Endothelial cell of umbilical vein (primary cell): ENCODE measurements at regions of chr4 and their contacts with region 1.

Region 1: DNA sequence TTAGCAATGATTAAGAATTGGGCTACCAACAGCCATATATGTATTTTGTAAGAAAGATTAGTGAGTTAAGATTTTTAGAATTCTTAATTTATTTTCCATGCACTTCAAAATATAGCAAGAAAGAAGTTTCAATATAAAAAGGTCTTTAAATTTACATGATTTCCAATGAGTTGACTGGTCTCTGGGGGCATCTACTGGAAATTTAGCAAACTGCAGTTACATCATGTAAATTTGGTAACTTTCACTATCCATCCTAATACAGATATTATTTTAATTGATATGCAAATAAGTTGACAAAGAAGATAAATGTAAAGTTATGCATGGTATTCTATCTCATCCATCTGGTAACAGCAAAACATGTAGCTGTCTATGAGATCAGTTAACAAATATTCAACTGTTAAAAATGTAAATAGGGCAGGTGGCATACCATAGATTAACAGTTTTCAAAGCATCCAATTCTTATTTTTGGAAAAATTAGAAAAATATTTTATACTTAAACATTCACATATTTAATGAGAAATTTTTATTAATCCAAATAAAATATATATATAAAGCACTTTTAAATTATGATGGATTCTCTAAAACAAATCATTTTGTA is 29.1 kb downstream of the TTC29 start:
- DNase-seq: peak; percentile 72
- H3K4me3 ChIP-seq: no peak overlapping the region
- H3K27ac ChIP-seq: no peak overlapping the region
- H3K4me1 ChIP-seq: no peaks in the 10 kb centered on the region
- H3K27me3 ChIP-seq: peaks cover 0 to 19% of the 10 kb centered on the region in 2 experiments
- CTCF ChIP-seq: peak; percentile 39 to 49
- POLR2A ChIP-seq: no peak

Region 2: DNA sequence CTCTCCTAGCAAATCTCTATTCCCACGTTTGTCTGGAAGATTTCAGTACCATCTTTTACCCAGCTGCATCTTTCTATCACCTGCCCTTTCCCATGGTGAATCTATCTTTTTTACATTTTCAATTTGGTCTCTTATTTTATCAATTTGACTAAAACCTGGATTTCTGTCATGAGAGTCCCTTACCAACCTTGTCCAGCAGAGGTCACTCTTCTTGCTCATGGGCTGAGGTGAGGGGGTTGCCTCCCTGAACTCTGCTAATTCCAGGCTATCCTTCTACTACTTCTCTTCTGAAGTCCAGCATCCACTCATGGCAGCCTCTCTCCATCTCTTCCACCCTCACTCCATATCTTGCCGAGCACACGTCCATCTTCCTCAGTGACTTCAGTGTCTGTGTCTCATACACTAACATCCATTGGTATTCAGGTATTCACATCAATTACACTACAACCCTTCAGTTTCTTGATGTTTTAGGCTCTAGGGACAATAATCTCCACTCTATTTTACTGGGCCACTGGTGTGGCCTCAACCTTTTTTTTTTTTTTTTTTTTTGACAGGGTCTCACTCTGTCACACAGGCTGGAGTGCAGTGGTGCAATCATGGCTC is 960.2 kb before region 1 on chr4:
- CTCF ChIA-PET with region 1: interaction called, 4 read pairs
- POLR2A ChIA-PET with region 1: no interaction called
- dilution Hi-C with region 1: no loop called
- intact Hi-C with region 1: loop called (anchors 1 kb)
- DNase-seq: peak; percentile 43
- H3K4me3 ChIP-seq: no peak overlapping the region
- H3K27ac ChIP-seq: no peak overlapping the region
- H3K4me1 ChIP-seq: peaks cover 10% of the 10 kb centered on the region
- H3K27me3 ChIP-seq: no peaks in the 10 kb centered on the region
- CTCF ChIP-seq: peak; percentile 68 to 77
- POLR2A ChIP-seq: no peak

Region 3: DNA sequence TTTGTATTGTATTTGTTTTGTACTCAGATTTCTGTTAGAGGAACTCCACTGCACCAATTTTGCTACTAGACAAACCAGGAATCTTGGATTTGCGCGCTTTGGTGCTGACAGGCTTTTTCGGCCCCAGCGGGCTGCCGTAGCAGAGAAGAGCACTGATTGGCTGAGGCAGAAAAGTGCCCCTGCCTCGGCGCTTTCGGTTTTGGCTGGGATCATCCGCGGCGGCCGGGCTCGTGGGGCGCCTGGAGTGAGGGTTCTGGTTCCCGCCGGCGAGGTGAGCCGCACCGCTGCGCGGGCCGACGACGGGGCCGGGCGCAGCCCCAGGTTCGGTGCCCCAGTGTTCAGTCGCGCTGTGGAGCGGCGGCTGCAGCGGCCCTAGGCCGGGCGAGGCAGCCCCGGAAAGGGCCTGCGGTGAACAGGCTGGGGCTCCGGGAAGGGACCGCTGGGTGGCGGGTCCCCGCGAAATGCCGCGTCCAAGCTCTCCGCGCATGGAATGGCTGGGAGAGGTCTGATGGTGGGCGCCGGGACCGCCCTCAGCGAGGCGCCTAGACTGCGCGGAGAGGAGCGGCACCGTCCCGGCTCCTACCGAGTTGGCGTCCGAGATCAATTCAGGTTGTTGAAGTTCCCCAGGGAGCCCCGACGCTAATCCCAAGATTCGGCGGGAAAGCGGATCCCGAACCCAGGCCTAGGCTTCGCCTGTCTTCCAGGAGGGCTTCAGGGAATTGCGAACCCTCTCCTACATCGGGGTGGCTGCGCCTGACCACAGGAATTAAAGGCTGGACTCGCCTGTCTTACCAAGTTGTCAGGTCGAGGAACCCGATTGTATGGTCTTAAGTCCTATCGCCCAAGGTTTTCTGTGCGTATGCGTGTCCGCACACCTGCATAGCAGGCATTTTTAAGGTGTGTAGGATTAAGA is 740.8 kb before region 1 on chr4 and contains the start of gene LSM6:
- CTCF ChIA-PET with region 1: no interaction called
- POLR2A ChIA-PET with region 1: no interaction called
- dilution Hi-C with region 1: no loop called
- intact Hi-C with region 1: loop called (anchors 2 kb)
- DNase-seq: peak; percentile 86
- H3K4me3 ChIP-seq: peak within 1 kb of the TSS; percentile 63 to 80 (median 72)
- H3K27ac ChIP-seq: peak within 1 kb of the TSS; percentile 65
- H3K4me1 ChIP-seq: peaks cover 10% of the 10 kb centered on the region
- H3K27me3 ChIP-seq: no peaks in the 10 kb centered on the region
- CTCF ChIP-seq: peak in 1 of 2 donors; percentile 1
- POLR2A ChIP-seq: peak; percentile 53
- total RNA-seq, gene LSM6: 34.7 and 43.1 TPM in 2 replicates

Region 4: DNA sequence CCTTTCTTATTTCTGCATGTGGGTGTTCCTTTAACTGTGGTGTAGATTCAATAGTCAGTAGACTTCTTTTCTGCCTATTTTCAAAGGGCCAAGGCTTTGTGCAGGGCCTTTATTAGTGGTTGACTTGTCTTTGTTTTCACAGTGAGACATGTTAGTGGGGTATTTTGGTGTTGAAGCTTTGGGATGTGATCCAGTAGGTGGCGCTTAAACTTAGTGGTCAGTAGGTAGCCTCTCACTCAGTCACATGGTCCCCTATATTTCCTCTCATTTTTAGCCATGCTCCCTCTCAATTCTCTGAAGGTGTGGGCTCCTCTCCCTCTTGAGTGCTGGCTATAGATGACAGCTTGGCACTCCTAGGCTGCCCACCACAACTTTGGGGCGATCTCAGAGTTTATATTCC is 371.5 kb before region 1 on chr4:
- CTCF ChIA-PET with region 1: no interaction called
- POLR2A ChIA-PET with region 1: no interaction called
- dilution Hi-C with region 1: no loop called
- intact Hi-C with region 1: loop called (anchors 5 kb)
- DNase-seq: peak; percentile 9
- H3K4me3 ChIP-seq: no peak overlapping the region
- H3K27ac ChIP-seq: no peak overlapping the region
- H3K4me1 ChIP-seq: no peaks in the 10 kb centered on the region
- H3K27me3 ChIP-seq: peaks cover 2 to 6% of the 10 kb centered on the region in 2 experiments
- CTCF ChIP-seq: peak; percentile 18 to 33
- POLR2A ChIP-seq: no peak

Region 5: GRCh38 chr4:146844761-146845160 is 71.8 kb before region 1 on chr4:
- CTCF ChIA-PET with region 1: no interaction called
- POLR2A ChIA-PET with region 1: no interaction called
- dilution Hi-C with region 1: no loop called
- intact Hi-C with region 1: no loop called
- DNase-seq: no peak
- H3K4me3 ChIP-seq: no peak overlapping the region
- H3K27ac ChIP-seq: no peak overlapping the region
- H3K4me1 ChIP-seq: no peaks in the 10 kb centered on the region
- H3K27me3 ChIP-seq: no peaks in the 10 kb centered on the region
- CTCF ChIP-seq: no peak
- POLR2A ChIP-seq: no peak